Activated CD8-positive, alpha-beta T cell treated with anti-CD3 and anti-CD28 coated beads, Interleukin-2, amount 10 ng/mL, durations not matched to agents 7 days and 5 days (primary cell): ENCODE measurements at regions of chr18 and their contacts with region 1.

Region 1: GRCh38 chr18:3245853-3246634 is 1.6 kb upstream of the MYL12A start:
- DNase-seq: peak; percentile 89
- ATAC-seq: peak; percentile 52
- H3K4me3 Mint-ChIP-seq: peak overlapping the region; percentile 82
- H3K27ac Mint-ChIP-seq: peak overlapping the region; percentile 100
- H3K4me1 Mint-ChIP-seq: peaks cover 23% of the 10 kb centered on the region
- H3K27me3 Mint-ChIP-seq: no peaks in the 10 kb centered on the region

Region 2: GRCh38 chr18:2932247-2933181 is 313.5 kb before region 1 on chr18:
- CTCF ChIA-PET with region 1: interaction called, 43 read pairs
- POLR2A ChIA-PET with region 1: no interaction called
- DNase-seq: peak; percentile 75
- ATAC-seq: peak; percentile 73
- H3K4me3 Mint-ChIP-seq: no peak overlapping the region
- H3K27ac Mint-ChIP-seq: peak overlapping the region; percentile 67
- H3K4me1 Mint-ChIP-seq: peaks cover 26% of the 10 kb centered on the region
- H3K27me3 Mint-ChIP-seq: no peaks in the 10 kb centered on the region

Region 3: DNA sequence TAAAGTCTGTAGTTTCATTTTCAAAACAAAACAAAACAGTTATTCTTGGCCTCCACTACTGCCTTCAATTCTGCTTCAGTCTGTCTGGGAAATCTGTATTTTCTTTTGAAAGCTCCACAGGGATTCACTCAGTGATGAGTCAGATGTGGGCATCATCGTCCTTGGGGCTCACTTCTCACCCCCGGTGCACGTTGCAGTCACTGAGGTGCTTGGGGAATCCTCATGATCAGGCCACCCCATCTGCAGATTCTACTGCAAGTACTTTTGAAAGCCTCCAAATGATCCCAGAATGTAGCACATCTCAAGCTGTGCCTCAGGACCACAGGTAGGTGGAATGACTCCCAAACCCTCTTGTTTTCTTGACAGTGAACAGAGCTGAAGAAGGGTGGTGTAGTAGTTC is 267.4 kb before region 1 on chr18:
- CTCF ChIA-PET with region 1: interaction called, 7 read pairs
- POLR2A ChIA-PET with region 1: interaction called, 15 read pairs
- DNase-seq: no peak
- ATAC-seq: no peak
- H3K4me3 Mint-ChIP-seq: peak overlapping the region; percentile 81
- H3K27ac Mint-ChIP-seq: peak overlapping the region; percentile 80
- H3K4me1 Mint-ChIP-seq: peaks cover 73% of the 10 kb centered on the region
- H3K27me3 Mint-ChIP-seq: no peaks in the 10 kb centered on the region

Region 4: GRCh38 chr18:3129053-3129864 is 116.8 kb before region 1 on chr18:
- CTCF ChIA-PET with region 1: interaction called, 25 read pairs
- POLR2A ChIA-PET with region 1: no interaction called
- DNase-seq: peak; percentile 89
- ATAC-seq: peak; percentile 100
- H3K4me3 Mint-ChIP-seq: no peak overlapping the region
- H3K27ac Mint-ChIP-seq: no peak overlapping the region
- H3K4me1 Mint-ChIP-seq: peaks cover 10% of the 10 kb centered on the region
- H3K27me3 Mint-ChIP-seq: no peaks in the 10 kb centered on the region

Region 5: GRCh38 chr18:3261371-3262246 is 15.6 kb after region 1 on chr18 and contains the start of gene MYL12B:
- CTCF ChIA-PET with region 1: interaction called, 18 read pairs
- POLR2A ChIA-PET with region 1: interaction called, 218 read pairs
- DNase-seq: peak; percentile 87
- ATAC-seq: peak; percentile 74
- H3K4me3 Mint-ChIP-seq: peak within 1 kb of the TSS; percentile 90
- H3K27ac Mint-ChIP-seq: peak within 1 kb of the TSS; percentile 100
- H3K4me1 Mint-ChIP-seq: peaks cover 78% of the 10 kb centered on the region
- H3K27me3 Mint-ChIP-seq: no peaks in the 10 kb centered on the region
- total RNA-seq, gene MYL12B: 402 to 404 TPM

Region 6: DNA sequence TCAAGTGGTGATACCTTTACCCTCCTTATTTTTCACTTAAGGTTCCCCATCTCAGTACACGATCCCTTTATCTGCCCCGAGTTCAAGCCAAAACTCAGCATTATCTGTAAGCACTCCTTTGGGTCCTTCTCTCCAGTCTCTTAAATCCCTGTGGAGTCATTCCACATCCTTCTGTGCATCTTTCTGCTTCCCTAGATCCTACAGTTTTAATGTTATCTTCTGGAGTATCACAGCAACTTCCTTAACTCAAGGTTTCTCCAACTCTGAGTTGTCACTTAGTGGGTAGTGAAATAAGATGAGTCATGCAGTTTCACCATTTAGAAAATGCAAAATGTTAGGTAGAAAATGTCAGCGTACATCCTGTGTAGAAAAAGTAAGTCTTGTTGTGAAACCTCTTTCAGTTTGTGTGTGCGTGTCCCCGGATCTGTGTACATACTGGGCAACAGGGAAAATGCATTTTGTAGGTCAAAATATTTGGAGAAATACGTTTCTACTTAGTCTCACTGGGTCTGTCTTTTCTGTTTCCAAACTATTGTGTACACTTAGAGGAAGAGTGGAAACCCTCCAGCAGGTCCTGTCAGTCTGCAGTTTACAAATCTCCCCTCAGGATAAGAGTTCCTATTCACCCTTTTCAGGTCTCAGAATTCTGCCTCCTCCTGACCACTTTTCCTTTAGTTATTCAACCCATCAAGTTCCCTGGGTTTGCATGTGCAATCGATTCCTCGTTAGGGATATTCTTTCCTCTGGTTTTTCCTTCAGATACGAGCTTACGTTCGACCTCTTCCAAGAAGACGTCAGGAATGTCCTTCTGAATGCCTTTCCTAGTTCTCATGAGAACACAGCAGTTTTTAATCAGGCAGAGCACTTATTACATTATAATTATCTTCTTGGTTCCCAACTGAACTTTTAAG is 358.7 kb after region 1 on chr18:
- CTCF ChIA-PET with region 1: no interaction called
- POLR2A ChIA-PET with region 1: interaction called, 10 read pairs
- DNase-seq: peak; percentile 52
- ATAC-seq: peak; percentile 71
- H3K4me3 Mint-ChIP-seq: no peak overlapping the region
- H3K27ac Mint-ChIP-seq: no peak overlapping the region
- H3K4me1 Mint-ChIP-seq: peaks cover 27% of the 10 kb centered on the region
- H3K27me3 Mint-ChIP-seq: no peaks in the 10 kb centered on the region